ENCODE measurements at regions of chr9 and their contacts with region 1.

Region 1: GRCh38 chr9:104927912-104928740 is at the start of gene ABCA1:
- DNase-seq: peak; percentile 89 to 93
- ATAC-seq: peak; percentile 84 to 90 (median 88)
- H3K4me3 ChIP-seq: peak within 1 kb of the TSS; percentile 71 to 94 (median 86)
- H3K27ac ChIP-seq: peak within 1 kb of the TSS; percentile 71 to 97 (median 85)
- H3K4me1 ChIP-seq: peaks cover 3 to 46% (median 20%) of the 10 kb centered on the region in 9 donors
- H3K27me3 ChIP-seq: peaks cover 0 to 3% (median 0%) of the 10 kb centered on the region in 7 donors
- CTCF ChIP-seq: no peak
- total RNA-seq, gene ABCA1: 7.6 to 35.0 (median 13.8) TPM

Region 2: DNA sequence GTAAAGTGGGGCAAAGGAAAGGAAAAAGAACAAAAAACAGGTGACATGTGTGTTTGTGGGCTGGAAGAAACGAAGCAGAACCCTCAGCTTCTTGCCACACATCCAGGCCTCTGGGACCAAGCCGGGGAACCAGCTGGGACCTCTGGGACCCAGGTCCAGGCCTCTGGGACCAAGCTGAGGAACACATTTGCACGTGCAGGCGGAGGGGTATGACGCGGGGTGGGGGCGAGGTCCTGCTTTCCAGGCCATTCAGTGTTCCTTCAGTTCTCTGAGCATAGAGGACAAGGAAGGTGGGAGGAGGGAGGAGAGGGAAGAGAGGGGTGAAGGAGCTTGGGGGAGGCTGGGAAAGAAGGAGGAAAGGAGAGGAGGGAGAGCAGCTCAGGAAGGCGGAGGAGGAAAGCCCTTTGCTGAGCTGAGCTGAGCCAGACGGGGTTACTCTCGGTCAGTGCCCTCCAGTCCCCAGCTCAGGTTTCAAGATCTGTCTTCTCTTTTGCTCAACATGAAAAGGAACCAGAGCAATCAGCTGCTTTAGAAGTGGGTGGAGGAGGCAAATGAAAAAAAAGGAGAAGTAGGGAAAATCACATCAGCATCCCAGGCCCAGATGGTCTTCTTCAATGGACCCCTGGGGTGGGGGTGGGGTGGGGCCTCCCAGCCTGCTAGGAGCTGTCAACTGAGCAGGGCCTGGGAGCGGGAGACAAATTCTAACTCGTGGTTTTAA is 59.3 kb before region 1 on chr9:
- intact Hi-C with region 1: loop called in 7 of 10 experiments (anchors 2 to 10 kb)
- DNase-seq: peak; percentile 52 to 69
- ATAC-seq: peak; percentile 88 to 92 (median 90)
- H3K4me3 ChIP-seq: no peak overlapping the region
- H3K27ac ChIP-seq: peak overlapping the region in 9 of 10 donors; percentile 30 to 82 (median 70)
- H3K4me1 ChIP-seq: peaks cover 22 to 84% (median 51%) of the 10 kb centered on the region in 9 donors
- H3K27me3 ChIP-seq: no peaks in the 10 kb centered on the region
- CTCF ChIP-seq: no peak

Region 3: DNA sequence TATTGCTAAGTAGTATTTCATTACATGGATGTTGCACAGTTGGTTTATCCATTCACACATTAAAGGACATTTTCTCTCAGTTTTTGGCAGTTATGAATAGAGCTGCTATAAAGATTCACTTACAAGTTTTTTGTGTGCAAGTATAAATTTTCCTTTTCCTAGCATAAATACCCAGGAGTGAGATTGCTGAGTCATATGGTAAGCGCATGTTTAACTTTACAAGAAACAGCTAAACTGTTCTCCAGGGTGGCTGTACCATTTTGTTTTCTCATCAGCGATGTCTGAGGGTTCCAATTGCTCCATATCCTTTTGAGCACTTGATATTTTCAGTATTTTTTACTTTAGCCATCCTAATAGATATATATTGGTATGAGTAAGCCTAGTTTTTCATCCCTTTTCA is 16.2 kb after region 1 on chr9:
- intact Hi-C with region 1: no loop called
- DNase-seq: no peak
- ATAC-seq: no peak
- H3K4me3 ChIP-seq: no peak overlapping the region
- H3K27ac ChIP-seq: no peak overlapping the region
- H3K4me1 ChIP-seq: no peaks in the 10 kb centered on the region
- H3K27me3 ChIP-seq: no peaks in the 10 kb centered on the region
- CTCF ChIP-seq: no peak

Region 4: DNA sequence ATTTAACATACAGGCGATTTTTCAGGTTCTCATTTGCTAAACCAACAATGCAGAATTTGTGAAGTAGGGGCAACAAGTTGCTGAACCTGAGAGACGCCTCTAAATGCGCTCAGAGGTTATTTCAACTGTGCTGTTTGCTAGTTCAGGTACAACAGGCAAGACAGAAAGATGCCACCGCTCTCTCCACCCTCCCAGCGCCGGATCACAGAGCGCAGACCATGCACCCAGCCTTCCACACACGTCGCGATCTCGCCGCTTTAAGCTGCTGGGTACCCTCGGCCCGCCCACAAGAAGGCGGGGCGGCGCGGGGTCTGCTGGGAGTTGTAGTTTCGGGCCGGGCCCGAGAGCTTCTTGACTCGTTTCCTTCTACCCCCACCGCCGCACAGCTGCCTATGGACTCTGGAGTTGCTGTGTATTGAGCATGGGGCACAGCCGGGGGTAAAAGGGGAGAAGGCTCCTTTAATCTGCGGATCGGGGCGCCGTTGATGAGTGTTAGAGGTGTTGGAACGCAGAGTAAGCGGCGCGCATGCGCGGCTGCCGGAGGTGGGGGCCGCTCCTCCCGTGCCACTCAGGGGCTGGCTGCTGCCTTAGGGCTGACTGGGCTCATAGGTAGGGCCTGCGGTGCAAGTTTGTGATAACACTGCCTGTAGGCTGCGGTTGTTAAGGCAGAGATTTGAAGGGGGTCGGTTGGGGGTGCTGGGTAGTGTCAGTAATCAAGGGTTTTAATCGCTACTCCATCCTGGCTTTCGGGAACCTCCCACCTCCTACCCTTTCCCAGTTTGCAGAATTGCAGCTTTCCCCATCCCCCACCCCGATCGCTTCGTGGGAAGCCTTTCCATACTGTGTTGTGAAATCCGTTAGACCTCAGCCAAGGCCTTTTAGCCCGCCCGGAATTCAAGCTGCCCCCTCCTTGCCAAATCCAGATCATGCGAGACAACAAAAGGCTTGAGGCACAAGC is 40.2 kb after region 1 on chr9:
- intact Hi-C with region 1: loop called in 9 of 10 experiments (anchors 1 to 5 kb)
- DNase-seq: peak; percentile 89 to 90
- ATAC-seq: peak; percentile 95 to 98 (median 97)
- H3K4me3 ChIP-seq: peak overlapping the region; percentile 65 to 93 (median 75)
- H3K27ac ChIP-seq: peak overlapping the region; percentile 84 to 98 (median 92)
- H3K4me1 ChIP-seq: peaks cover 0 to 25% (median 9%) of the 10 kb centered on the region in 9 donors
- H3K27me3 ChIP-seq: no peaks in the 10 kb centered on the region
- CTCF ChIP-seq: no peak

Region 5: GRCh38 chr9:105046907-105047741 is 119.0 kb after region 1 on chr9:
- intact Hi-C with region 1: loop called in 2 of 10 experiments (anchors 10 kb)
- DNase-seq: no peak
- ATAC-seq: peak in 1 of 8 donors; percentile 18
- H3K4me3 ChIP-seq: no peak overlapping the region
- H3K27ac ChIP-seq: no peak overlapping the region
- H3K4me1 ChIP-seq: peaks cover 0 to 33% (median 9%) of the 10 kb centered on the region in 9 donors
- H3K27me3 ChIP-seq: no peaks in the 10 kb centered on the region
- CTCF ChIP-seq: no peak

Region 6: DNA sequence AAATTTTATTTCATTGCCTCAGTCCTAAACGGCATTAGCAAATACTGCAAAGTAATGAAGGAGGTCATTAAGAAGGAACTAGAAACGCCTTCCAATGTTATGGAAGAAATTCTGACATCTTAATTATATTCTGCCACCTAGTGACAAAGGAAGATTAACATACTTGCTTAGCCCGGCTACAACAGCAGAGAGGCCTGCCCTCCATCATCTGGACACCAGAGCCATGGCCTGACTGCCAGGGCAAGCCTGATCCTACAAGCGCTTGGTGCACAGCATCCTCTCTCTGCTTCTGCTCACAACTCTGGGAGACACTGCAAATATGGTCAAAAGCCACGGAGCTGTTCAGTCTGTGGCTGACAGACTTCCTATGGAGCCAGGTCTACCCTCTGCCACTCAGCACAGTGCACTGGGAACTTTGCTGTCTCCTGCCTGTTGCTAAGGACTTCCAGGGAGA is 229.0 kb after region 1 on chr9:
- intact Hi-C with region 1: loop called in 9 of 10 experiments (anchors 1 to 5 kb)
- DNase-seq: peak; percentile 42 to 50
- ATAC-seq: peak; percentile 86 to 93 (median 88)
- H3K4me3 ChIP-seq: no peak overlapping the region
- H3K27ac ChIP-seq: peak overlapping the region in 2 of 10 donors; percentile 2 to 7
- H3K4me1 ChIP-seq: peaks cover 0 to 32% (median 4%) of the 10 kb centered on the region in 9 donors
- H3K27me3 ChIP-seq: no peaks in the 10 kb centered on the region
- CTCF ChIP-seq: peak in 8 of 9 donors; percentile 49 to 73 (median 64)

Region 7: GRCh38 chr9:105414947-105415661 is 487.0 kb after region 1 on chr9:
- intact Hi-C with region 1: loop called in 2 of 10 experiments (anchors 5 to 10 kb)
- DNase-seq: peak in 1 of 2 donors; percentile 45
- ATAC-seq: peak; percentile 59 to 80 (median 71)
- H3K4me3 ChIP-seq: no peak overlapping the region
- H3K27ac ChIP-seq: no peak overlapping the region
- H3K4me1 ChIP-seq: peaks cover 0 to 11% (median 0%) of the 10 kb centered on the region in 9 donors
- H3K27me3 ChIP-seq: no peaks in the 10 kb centered on the region
- CTCF ChIP-seq: peak; percentile 70 to 92 (median 88)